ENCODE measurements at regions of chr15 and their contacts with region 1.

Region 1: GRCh38 chr15:52679232-52680040 is at the start of gene ATOSA:
- DNase-seq: peak; percentile 94
- ATAC-seq: peak; percentile 79
- H3K4me3 Mint-ChIP-seq: peak within 1 kb of the TSS; percentile 99
- H3K27ac Mint-ChIP-seq: peak within 1 kb of the TSS; percentile 99
- H3K4me1 Mint-ChIP-seq: peaks cover 38% of the 10 kb centered on the region
- H3K27me3 Mint-ChIP-seq: no peaks in the 10 kb centered on the region
- CTCF ChIP-seq: no peak
- total RNA-seq, gene ATOSA: 13.1 TPM

Region 2: DNA sequence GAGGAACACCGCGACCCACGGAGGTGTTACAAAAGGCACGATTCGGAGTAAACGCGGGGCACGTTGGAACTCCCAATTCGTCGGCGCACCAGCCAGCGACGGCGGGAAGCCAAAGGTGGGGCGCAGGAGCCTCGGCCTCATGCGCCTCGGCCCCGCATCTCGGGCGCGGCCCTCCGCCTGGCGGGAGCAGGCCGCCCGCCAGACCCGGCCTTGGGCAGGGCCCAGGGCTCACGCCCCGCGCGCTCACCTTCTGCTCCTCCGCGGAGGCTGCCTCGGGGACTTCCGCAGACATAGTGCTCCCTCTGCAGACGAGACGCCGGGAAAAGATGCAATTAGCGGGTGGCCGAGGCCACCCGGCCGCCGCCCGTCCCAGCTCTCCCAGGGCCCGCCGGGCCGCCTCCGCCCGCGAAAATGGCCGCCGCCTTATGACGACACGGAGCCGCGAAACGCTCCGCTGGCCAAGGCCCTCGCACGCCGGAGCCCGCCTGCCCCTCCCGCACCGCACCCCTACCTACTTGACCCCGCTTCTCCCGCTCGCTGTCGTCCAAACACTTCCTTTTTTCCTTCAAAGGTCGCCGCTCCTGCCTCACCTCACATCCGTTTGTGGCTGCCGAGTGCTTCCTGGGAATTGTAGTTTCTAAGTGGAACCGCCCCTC is 110.7 kb before region 1 on chr15 and contains the start of gene ARPP19:
- CTCF ChIA-PET with region 1: interaction called, 3 read pairs
- POLR2A ChIA-PET with region 1: interaction called, 3 read pairs
- intact Hi-C with region 1: loop called (anchors 10 kb)
- DNase-seq: peak; percentile 90
- ATAC-seq: peak; percentile 82
- H3K4me3 Mint-ChIP-seq: peak within 1 kb of the TSS; percentile 95
- H3K27ac Mint-ChIP-seq: peak within 1 kb of the TSS; percentile 98
- H3K4me1 Mint-ChIP-seq: peaks cover 30% of the 10 kb centered on the region
- H3K27me3 Mint-ChIP-seq: no peaks in the 10 kb centered on the region
- CTCF ChIP-seq: no peak
- total RNA-seq, gene ARPP19: 129 TPM

Region 3: GRCh38 chr15:52749258-52749657 is 69.8 kb after region 1 on chr15:
- CTCF ChIA-PET with region 1: no interaction called
- POLR2A ChIA-PET with region 1: no interaction called
- intact Hi-C with region 1: no loop called
- DNase-seq: no peak
- ATAC-seq: no peak
- H3K4me3 Mint-ChIP-seq: no peak overlapping the region
- H3K27ac Mint-ChIP-seq: no peak overlapping the region
- H3K4me1 Mint-ChIP-seq: no peaks in the 10 kb centered on the region
- H3K27me3 Mint-ChIP-seq: peaks cover 16% of the 10 kb centered on the region
- CTCF ChIP-seq: no peak

Region 4: GRCh38 chr15:52772766-52773165 is 93.3 kb after region 1 on chr15:
- CTCF ChIA-PET with region 1: no interaction called
- POLR2A ChIA-PET with region 1: no interaction called
- intact Hi-C with region 1: no loop called
- DNase-seq: no peak
- ATAC-seq: no peak
- H3K4me3 Mint-ChIP-seq: no peak overlapping the region
- H3K27ac Mint-ChIP-seq: no peak overlapping the region
- H3K4me1 Mint-ChIP-seq: no peaks in the 10 kb centered on the region
- H3K27me3 Mint-ChIP-seq: peaks cover 35% of the 10 kb centered on the region
- CTCF ChIP-seq: no peak